ENCODE measurements at regions of chr14 and their contacts with region 1.

Region 1: GRCh38 chr14:91649930-91650329 is 82.0 kb downstream of the CATSPERB start:
- DNase-seq: peak; percentile 49
- H3K4me3 Mint-ChIP-seq: no peak overlapping the region
- H3K27ac Mint-ChIP-seq: no peak overlapping the region
- H3K4me1 Mint-ChIP-seq: no peaks in the 10 kb centered on the region
- H3K27me3 Mint-ChIP-seq: no peaks in the 10 kb centered on the region

Region 2: DNA sequence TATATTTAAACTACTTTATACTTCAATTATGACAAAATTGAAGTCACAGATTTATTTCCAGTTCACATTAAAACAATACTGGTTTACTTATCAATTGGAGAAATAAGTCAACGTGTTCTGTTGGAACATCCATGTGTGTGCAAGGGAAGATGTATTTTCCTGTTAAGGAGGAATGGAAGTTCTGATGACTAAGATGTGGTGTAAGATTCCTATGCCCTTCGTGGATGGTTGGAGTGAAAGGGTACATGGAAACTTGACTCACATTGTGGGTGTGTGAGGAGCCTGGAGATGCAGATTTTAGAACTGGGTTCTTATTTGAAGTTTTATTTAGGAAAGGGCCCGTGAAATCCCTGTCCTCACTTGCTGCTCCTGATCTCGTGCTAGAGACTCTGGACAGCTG is 13.3 kb before region 1 on chr14:
- CTCF ChIA-PET with region 1: no interaction called
- intact Hi-C with region 1: no loop called
- DNase-seq: no peak
- H3K4me3 Mint-ChIP-seq: no peak overlapping the region
- H3K27ac Mint-ChIP-seq: no peak overlapping the region
- H3K4me1 Mint-ChIP-seq: no peaks in the 10 kb centered on the region
- H3K27me3 Mint-ChIP-seq: no peaks in the 10 kb centered on the region

Region 3: DNA sequence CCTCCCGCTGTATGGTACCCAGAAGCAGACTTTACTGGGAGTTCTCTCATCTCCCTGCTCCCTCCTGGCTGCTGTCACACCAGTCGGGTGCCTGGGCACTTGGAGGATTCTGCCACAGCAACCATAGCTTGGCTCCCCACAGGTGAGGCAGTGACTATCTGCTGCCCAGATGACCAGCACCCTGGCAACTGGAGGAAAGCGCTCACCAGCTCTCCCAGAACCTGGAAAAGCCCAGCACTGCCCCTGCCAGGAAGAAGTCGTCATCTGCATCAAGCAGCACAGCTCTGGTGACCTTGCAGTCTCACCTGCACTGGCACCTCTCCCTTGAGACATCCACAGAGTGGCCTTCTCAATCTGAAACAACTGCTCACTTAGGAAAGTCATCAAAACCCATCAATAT is 249.3 kb after region 1 on chr14:
- CTCF ChIA-PET with region 1: interaction called, 20 read pairs
- intact Hi-C with region 1: loop called (anchors 2 kb)
- DNase-seq: peak; percentile 68
- H3K4me3 Mint-ChIP-seq: no peak overlapping the region
- H3K27ac Mint-ChIP-seq: no peak overlapping the region
- H3K4me1 Mint-ChIP-seq: peaks cover 8% of the 10 kb centered on the region
- H3K27me3 Mint-ChIP-seq: no peaks in the 10 kb centered on the region

Region 4: GRCh38 chr14:91996948-91997371 is 347.0 kb after region 1 on chr14:
- CTCF ChIA-PET with region 1: interaction called, 6 read pairs
- intact Hi-C with region 1: loop called (anchors 5 kb)
- DNase-seq: no peak
- H3K4me3 Mint-ChIP-seq: no peak overlapping the region
- H3K27ac Mint-ChIP-seq: no peak overlapping the region
- H3K4me1 Mint-ChIP-seq: peaks cover 38% of the 10 kb centered on the region
- H3K27me3 Mint-ChIP-seq: no peaks in the 10 kb centered on the region